ENCODE measurements at regions of chr2 and their contacts with region 1.

Region 1: DNA sequence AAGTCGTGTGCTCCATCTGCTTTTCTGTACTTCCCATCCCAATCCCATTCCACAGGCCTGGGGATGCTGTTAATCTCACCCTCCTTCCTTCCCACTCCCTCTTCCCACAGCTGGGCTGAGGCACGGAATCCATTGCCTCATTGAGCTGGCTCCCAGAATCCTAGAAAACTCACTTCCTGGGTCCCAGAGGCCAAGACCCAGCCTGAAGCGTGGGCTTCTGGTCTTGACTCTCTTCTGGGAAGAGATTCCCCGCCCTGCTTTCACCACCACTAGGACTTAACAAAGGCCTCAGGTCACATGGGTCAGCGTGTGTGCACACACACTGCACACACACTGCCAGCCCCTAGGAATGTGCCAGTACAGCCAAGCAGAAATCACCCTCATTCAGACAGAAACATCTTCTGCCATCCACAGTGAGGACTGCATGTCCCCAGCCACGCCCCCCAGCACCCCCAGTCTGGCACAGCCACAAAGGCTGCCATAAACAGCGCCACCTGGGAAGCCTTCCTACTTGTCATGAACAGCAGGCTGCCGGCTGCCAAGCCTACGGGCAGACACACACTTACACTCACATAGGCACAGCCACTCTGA is 165.8 kb downstream of the TNS1 start:
- DNase-seq: peak in 1 of 2 experiments; percentile 78
- H3K4me3 ChIP-seq: no peak overlapping the region
- H3K27ac ChIP-seq: 0 out of 2 replicates have a peak overlapping the region, but pooled peaks have one; percentile 5
- H3K4me1 ChIP-seq: peaks cover 0 to 9% (median 6%) of the 10 kb centered on the region in 4 experiments; a peak in 5 of 7 replicates
- H3K27me3 ChIP-seq: no peaks in the 10 kb centered on the region
- CTCF ChIP-seq: peak; percentile 33 to 52 (median 36)
- EP300 ChIP-seq: no peak
- POLR2A ChIP-seq: no peak
- RAD21 ChIP-seq: peak in 1 of 2 experiments; percentile 19; a peak in 1 of 4 replicates

Region 2: DNA sequence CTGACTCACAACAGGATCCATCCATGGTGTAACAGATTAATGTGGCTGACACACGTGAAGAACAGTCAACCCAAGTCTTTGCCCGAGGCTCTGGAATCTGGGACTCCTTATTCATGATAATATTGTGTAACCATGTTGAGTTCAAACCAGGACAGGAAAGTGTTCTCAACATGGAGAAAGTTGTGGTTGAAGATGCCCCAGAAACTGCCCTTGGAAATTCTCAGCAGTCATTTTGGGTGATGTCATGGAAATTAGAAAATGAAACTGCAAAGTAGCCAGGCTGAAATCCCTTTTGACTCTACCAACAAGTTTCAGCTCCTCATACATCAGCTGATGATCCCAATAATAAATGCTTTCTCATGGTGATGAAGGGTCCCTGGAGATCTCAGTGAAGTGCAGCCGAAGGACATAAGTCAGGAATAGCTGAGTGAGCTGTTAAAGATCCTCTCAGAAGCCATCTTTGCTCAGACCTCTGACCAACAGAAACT is 141.9 kb before region 1 on chr2:
- CTCF ChIA-PET with region 1: no interaction called
- POLR2A ChIA-PET with region 1: no interaction called
- DNase-seq: no peak
- H3K4me3 ChIP-seq: no peak overlapping the region
- H3K27ac ChIP-seq: no peak overlapping the region
- H3K4me1 ChIP-seq: no peaks in the 10 kb centered on the region
- H3K27me3 ChIP-seq: no peaks in the 10 kb centered on the region
- CTCF ChIP-seq: no peak
- EP300 ChIP-seq: no peak
- POLR2A ChIP-seq: no peak
- RAD21 ChIP-seq: no peak

Region 3: DNA sequence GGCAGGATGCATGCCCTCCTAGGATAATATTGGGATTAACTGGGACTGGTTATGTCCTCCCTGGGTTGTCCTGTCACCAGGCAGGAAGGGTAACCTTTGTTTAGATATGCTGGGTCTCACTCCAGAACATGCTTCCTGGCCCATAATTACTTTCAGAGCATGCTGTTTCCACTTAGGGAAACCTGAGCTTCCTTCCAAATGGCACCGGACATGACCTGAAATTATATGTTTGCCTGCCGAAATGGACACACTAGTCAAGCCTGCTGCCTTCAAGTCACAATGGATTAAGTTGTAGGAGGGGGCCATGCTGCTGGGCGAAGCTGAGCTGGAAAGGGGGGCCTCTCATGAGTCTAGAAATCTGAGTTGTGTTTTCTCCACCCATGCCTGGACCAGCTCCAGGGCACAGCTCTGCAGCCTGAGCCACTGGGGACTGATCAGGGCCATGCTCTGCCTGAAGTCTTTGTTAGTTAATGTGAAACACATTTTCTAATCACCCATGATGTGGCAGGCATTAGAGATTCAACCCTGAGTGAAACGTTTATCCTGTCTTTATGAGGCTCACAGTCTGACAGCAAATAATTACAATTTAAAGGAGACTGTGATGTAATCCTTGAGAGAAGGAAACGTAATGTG is 107.5 kb before region 1 on chr2:
- CTCF ChIA-PET with region 1: no interaction called
- POLR2A ChIA-PET with region 1: no interaction called
- DNase-seq: no peak
- H3K4me3 ChIP-seq: no peak overlapping the region
- H3K27ac ChIP-seq: no peak overlapping the region
- H3K4me1 ChIP-seq: no peaks in the 10 kb centered on the region
- H3K27me3 ChIP-seq: no peaks in the 10 kb centered on the region
- CTCF ChIP-seq: no peak
- EP300 ChIP-seq: no peak
- POLR2A ChIP-seq: no peak
- RAD21 ChIP-seq: no peak

Region 4: GRCh38 chr2:217822296-217823252 is 14.4 kb before region 1 on chr2:
- CTCF ChIA-PET with region 1: interaction called, 25 read pairs
- POLR2A ChIA-PET with region 1: interaction called, 3 read pairs
- DNase-seq: no peak
- H3K4me3 ChIP-seq: no peak overlapping the region
- H3K27ac ChIP-seq: no peak overlapping the region
- H3K4me1 ChIP-seq: peaks cover 0 to 3% (median under 1%) of the 10 kb centered on the region in 4 experiments; a peak in 1 of 7 replicates
- H3K27me3 ChIP-seq: no peaks in the 10 kb centered on the region
- CTCF ChIP-seq: peak; percentile 36 to 45 (median 40)
- EP300 ChIP-seq: no peak
- POLR2A ChIP-seq: no peak
- RAD21 ChIP-seq: no peak; a peak in 1 of 4 replicates

Region 5: DNA sequence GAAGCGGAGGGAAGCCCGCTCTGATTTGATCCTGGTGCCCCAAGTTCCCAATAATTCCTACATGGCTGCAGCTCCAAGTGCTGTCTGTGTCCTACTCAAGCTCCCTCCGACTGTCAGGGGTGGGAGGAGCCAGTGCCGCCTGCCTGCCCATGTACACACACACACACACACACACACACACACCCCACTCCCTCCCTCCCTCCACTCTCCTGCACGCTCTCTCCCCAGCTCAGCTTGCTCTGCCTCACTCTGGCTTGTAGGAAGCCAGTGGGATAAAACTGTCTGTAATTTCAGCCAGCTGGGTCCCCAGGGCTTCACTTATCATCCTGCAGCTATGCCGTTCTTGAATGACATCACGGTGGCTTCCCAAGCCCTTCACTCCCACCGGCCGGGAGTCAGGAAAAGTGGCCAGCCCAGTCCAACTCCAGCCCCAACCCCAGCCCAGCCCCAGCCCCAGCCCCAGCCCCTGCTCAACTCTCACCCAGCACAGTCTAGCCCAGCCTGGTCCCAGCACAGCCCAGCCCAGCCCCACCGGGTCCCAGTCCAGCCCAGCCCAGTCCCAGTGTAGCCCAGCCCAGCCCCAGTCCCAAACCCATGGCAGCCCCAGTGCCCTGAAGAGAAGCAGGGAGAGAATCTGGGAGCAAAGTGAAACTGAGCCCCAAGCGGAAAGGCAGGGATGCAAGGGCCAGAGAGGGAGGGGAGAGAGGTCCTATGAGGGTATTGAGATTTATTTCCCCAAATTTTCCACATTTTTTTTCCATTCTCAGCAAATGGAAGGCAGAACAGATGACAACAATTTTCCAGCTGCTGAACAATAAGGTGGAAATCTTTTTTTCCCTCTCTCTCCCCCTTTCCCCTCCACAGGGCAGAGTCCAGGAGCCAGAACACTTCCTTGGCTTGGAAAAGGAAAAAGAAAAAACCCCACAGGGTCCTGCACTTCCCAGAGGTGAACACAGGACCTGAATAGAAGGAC is 21.8 kb after region 1 on chr2:
- CTCF ChIA-PET with region 1: interaction called, 25 read pairs
- POLR2A ChIA-PET with region 1: no interaction called
- DNase-seq: no peak
- H3K4me3 ChIP-seq: no peak overlapping the region
- H3K27ac ChIP-seq: no peak overlapping the region
- H3K4me1 ChIP-seq: peaks cover 0 to 18% (median 2%) of the 10 kb centered on the region in 4 experiments; a peak in 5 of 7 replicates
- H3K27me3 ChIP-seq: no peaks in the 10 kb centered on the region
- CTCF ChIP-seq: no peak
- EP300 ChIP-seq: no peak
- POLR2A ChIP-seq: no peak
- RAD21 ChIP-seq: no peak

Region 6: DNA sequence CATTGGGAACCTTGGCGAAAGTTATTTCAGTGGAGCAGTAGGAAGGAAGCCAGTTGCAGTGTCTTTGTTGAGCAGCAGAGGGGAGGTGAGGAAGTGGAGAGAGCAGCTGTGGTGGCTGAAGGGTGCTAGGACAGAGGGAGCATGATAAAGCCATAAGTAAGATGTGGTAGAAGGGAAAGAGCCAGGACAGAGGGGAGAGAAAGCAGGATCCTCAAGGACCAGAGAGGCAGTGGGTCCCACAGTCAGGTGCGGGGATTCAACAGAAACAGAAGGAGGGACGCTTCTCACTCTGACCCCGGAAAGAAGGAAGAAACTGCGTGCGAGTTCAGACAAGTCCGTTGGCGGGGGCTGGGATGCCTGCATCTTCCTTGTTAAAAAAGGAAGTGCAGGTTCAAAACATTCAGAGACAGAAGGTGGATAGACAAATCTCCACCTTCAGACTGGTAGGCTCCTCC is 288.7 kb after region 1 on chr2 and contains the start of gene CXCR2:
- CTCF ChIA-PET with region 1: no interaction called
- POLR2A ChIA-PET with region 1: no interaction called
- DNase-seq: no peak
- H3K4me3 ChIP-seq: no peak within 1 kb of the TSS
- H3K27ac ChIP-seq: no peak within 1 kb of the TSS
- H3K4me1 ChIP-seq: peaks cover 0 to 13% (median 6%) of the 10 kb centered on the region in 4 experiments; a peak in 2 of 7 replicates
- H3K27me3 ChIP-seq: 0 out of 7 replicates have a peak, but pooled peaks cover 0 to 2% (median 0%) of the 10 kb centered on the region in 4 experiments
- CTCF ChIP-seq: peak in 2 of 3 experiments; percentile 7 to 8; a peak in 2 of 4 replicates
- EP300 ChIP-seq: no peak
- POLR2A ChIP-seq: no peak
- RAD21 ChIP-seq: no peak
- total RNA-seq, gene CXCR2: 0.63 and 1.6 TPM in 2 replicates